ENCODE measurements at regions of chr3 and their contacts with region 1.

Region 1: GRCh38 chr3:187745201-187746058 is at the start of gene BCL6:
- DNase-seq: no peak
- ATAC-seq: peak; percentile 63
- H3K4me3 ChIP-seq: peak within 1 kb of the TSS; percentile 65; the same call in 1 of the 2 replicates
- H3K27ac ChIP-seq: no peak within 1 kb of the TSS
- H3K4me1 ChIP-seq: peaks cover 7% of the 10 kb centered on the region
- H3K27me3 ChIP-seq: peaks cover 14 to 21% of the 10 kb centered on the region in 2 experiments
- CTCF ChIP-seq: no peak
- EP300 ChIP-seq: no peak
- POLR2A ChIP-seq: 0 out of 2 replicates have a peak, but pooled peaks have one; percentile 16
- RAD21 ChIP-seq: no peak
- polyA plus RNA-seq, gene BCL6: 0.04 to 0.06 TPM

Region 2: GRCh38 chr3:187669675-187670504 is 75.5 kb before region 1 on chr3 and contains the start of gene SST:
- CTCF ChIA-PET with region 1: no interaction called
- POLR2A ChIA-PET with region 1: no interaction called
- RAD21 ChIA-PET with region 1: no interaction called
- SMC1A ChIA-PET with region 1: no interaction called
- in situ Hi-C with region 1: no loop called
- intact Hi-C with region 1: no loop called
- DNase-seq: no peak
- ATAC-seq: no peak
- H3K4me3 ChIP-seq: no peak within 1 kb of the TSS
- H3K27ac ChIP-seq: no peak within 1 kb of the TSS
- H3K4me1 ChIP-seq: no peaks in the 10 kb centered on the region
- H3K27me3 ChIP-seq: peaks cover 4 to 6% of the 10 kb centered on the region in 2 experiments; a peak in 3 of 4 replicates
- CTCF ChIP-seq: no peak
- EP300 ChIP-seq: no peak
- POLR2A ChIP-seq: no peak
- RAD21 ChIP-seq: no peak
- polyA plus RNA-seq, gene SST: not detected

Region 3: DNA sequence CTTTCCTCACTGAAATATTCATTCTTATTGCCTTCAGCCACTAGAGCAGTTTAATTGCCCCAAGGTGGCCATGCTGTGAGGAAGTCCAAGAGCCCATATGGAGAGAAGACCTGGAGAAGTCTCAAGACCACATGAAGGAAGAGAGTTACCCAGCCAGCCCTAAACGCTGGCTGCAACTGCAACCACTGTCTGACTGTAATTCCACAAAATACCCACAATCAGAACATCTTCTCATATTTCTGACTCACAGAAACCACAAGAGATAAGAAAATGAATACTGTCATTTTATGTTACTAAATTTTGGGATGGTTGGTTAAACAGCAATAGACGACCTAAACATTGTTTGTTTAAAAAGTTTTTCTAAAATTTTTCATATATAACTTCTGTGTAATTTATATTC is 60.5 kb before region 1 on chr3:
- CTCF ChIA-PET with region 1: no interaction called
- POLR2A ChIA-PET with region 1: no interaction called
- RAD21 ChIA-PET with region 1: no interaction called
- SMC1A ChIA-PET with region 1: no interaction called
- in situ Hi-C with region 1: no loop called
- intact Hi-C with region 1: no loop called
- DNase-seq: no peak
- ATAC-seq: no peak
- H3K4me3 ChIP-seq: no peak overlapping the region
- H3K27ac ChIP-seq: no peak overlapping the region
- H3K4me1 ChIP-seq: no peaks in the 10 kb centered on the region
- H3K27me3 ChIP-seq: no peaks in the 10 kb centered on the region
- CTCF ChIP-seq: no peak
- EP300 ChIP-seq: no peak
- POLR2A ChIP-seq: no peak
- RAD21 ChIP-seq: no peak

Region 4: GRCh38 chr3:187777331-187777941 is 32.0 kb after region 1 on chr3:
- CTCF ChIA-PET with region 1: interaction called, 6 read pairs
- POLR2A ChIA-PET with region 1: no interaction called
- RAD21 ChIA-PET with region 1: no interaction called
- SMC1A ChIA-PET with region 1: interaction called, 10 read pairs
- in situ Hi-C with region 1: no loop called
- intact Hi-C with region 1: no loop called
- DNase-seq: peak; percentile 46
- ATAC-seq: peak; percentile 58
- H3K4me3 ChIP-seq: no peak overlapping the region
- H3K27ac ChIP-seq: no peak overlapping the region; the same call in 1 of the 2 replicates
- H3K4me1 ChIP-seq: peaks cover 27% of the 10 kb centered on the region
- H3K27me3 ChIP-seq: no peaks in the 10 kb centered on the region
- CTCF ChIP-seq: no peak
- EP300 ChIP-seq: peak in 1 of 2 experiments; percentile 33; a peak in 1 of 4 replicates
- POLR2A ChIP-seq: no peak
- RAD21 ChIP-seq: no peak

Region 5: DNA sequence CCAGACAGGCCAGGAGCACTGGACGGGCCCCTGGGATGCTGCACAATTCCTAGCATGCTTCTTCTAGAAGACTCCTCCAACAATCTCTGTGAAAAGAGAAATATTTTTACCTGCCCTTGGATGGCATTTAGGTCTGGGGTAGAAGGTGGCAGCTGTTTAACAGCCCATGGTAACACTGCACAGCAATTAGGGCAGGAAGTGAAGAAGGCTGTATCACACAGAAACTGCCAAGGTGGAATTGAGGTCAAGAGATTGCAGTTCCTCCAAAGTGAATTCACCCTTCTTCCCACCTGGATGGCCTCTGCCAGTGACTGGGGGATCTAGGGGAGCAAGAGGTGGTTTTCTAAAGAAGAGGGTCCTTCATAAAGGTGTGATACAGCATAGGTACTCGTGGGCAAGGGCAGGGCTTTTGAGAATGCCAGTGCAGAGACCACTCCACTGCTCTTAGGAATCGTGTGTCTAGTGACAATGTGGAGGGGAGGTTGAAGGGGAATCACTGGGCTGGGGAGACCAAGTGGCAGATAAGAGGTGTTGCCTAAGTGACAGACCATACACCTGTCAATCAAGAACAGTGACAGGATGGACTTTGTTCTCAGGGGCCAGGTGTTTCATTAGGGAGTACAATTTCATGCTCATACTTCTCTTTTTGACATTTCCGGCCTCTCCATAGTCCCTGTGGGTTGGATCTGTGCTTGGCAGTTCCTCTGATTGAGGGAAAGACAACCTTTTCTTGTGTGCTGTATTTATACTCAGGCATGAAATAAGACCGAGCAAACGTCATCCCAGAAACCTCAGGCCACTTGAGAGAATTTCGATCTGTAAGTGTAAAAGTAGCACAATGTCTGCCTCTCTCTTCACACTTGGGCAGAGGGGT is 83.4 kb after region 1 on chr3:
- CTCF ChIA-PET with region 1: interaction called, 37 read pairs
- POLR2A ChIA-PET with region 1: interaction called, 3 read pairs
- RAD21 ChIA-PET with region 1: interaction called, 4 read pairs
- SMC1A ChIA-PET with region 1: interaction called, 27 read pairs
- in situ Hi-C with region 1: no loop called
- intact Hi-C with region 1: loop called (anchors 1 kb)
- DNase-seq: peak; percentile 34
- ATAC-seq: peak; percentile 88
- H3K4me3 ChIP-seq: no peak overlapping the region
- H3K27ac ChIP-seq: no peak overlapping the region
- H3K4me1 ChIP-seq: peaks cover 5% of the 10 kb centered on the region; the same call in 1 of the 2 replicates
- H3K27me3 ChIP-seq: 0 out of 4 replicates have a peak, but pooled peaks cover 0 to 4% of the 10 kb centered on the region in 2 experiments
- CTCF ChIP-seq: no peak
- EP300 ChIP-seq: peak; percentile 81; a peak in 2 of 4 replicates
- POLR2A ChIP-seq: no peak
- RAD21 ChIP-seq: no peak

Region 6: GRCh38 chr3:187919048-187919447 is 173.6 kb after region 1 on chr3:
- CTCF ChIA-PET with region 1: interaction called, 7 read pairs
- POLR2A ChIA-PET with region 1: no interaction called
- RAD21 ChIA-PET with region 1: interaction called, 3 read pairs
- SMC1A ChIA-PET with region 1: interaction called, 8 read pairs
- in situ Hi-C with region 1: no loop called
- intact Hi-C with region 1: loop called (anchors 2 kb)
- DNase-seq: peak; percentile 40
- ATAC-seq: peak; percentile 90
- H3K4me3 ChIP-seq: no peak overlapping the region
- H3K27ac ChIP-seq: no peak overlapping the region
- H3K4me1 ChIP-seq: peaks cover 18% of the 10 kb centered on the region
- H3K27me3 ChIP-seq: peaks cover 0 to 2% of the 10 kb centered on the region in 2 experiments; a peak in 1 of 4 replicates
- CTCF ChIP-seq: no peak
- EP300 ChIP-seq: 0 out of 4 replicates have a peak, but pooled peaks of 1 of the 2 experiments have one; percentile 55
- POLR2A ChIP-seq: no peak
- RAD21 ChIP-seq: 0 out of 2 replicates have a peak, but pooled peaks have one; percentile 3

Region 7: GRCh38 chr3:188348435-188349244 is 603.2 kb after region 1 on chr3:
- CTCF ChIA-PET with region 1: interaction called, 9 read pairs
- POLR2A ChIA-PET with region 1: no interaction called
- RAD21 ChIA-PET with region 1: no interaction called
- SMC1A ChIA-PET with region 1: interaction called, 3 read pairs
- in situ Hi-C with region 1: no loop called
- intact Hi-C with region 1: loop called (anchors 10 kb)
- DNase-seq: no peak
- ATAC-seq: no peak
- H3K4me3 ChIP-seq: no peak overlapping the region
- H3K27ac ChIP-seq: no peak overlapping the region
- H3K4me1 ChIP-seq: no peaks in the 10 kb centered on the region
- H3K27me3 ChIP-seq: peaks cover 0 to 4% of the 10 kb centered on the region in 2 experiments; a peak in 2 of 4 replicates
- CTCF ChIP-seq: no peak
- EP300 ChIP-seq: no peak
- POLR2A ChIP-seq: no peak
- RAD21 ChIP-seq: no peak

Region 8: DNA sequence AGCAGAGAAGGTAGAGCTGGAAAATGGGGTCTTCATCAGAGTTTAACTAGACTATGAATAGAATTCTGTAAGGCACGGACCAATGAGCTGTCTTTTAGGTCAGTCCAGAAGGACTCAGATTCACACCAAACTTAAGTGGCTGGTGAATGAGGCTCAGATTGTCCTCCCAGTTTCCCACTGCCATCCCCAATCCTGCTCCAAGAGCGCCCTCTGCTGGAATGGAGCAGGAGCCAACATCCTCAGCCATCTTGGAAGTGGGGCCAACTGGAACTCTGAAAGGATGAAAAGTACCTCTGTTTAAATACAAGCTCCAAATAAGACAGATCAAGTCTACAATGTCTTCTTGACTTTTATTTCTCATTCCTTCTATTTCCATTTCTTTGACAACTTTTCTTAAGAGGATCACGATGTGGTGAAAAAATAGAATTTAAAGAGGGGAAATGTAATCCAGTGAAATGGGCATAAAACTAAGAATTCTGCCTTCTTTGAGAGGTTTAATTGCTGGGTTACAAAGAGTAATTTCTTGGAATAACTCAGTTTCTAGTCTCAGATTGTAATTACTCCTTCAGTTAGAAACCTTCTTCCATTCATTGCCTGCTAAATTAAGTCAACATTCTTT is 1209.3 kb after region 1 on chr3:
- CTCF ChIA-PET with region 1: interaction called, 437 read pairs
- POLR2A ChIA-PET with region 1: interaction called, 3 read pairs
- RAD21 ChIA-PET with region 1: interaction called, 130 read pairs
- SMC1A ChIA-PET with region 1: interaction called, 118 read pairs
- in situ Hi-C with region 1: loop called (anchors 5 kb)
- intact Hi-C with region 1: no loop called
- DNase-seq: peak; percentile 3
- ATAC-seq: peak; percentile 79
- H3K4me3 ChIP-seq: no peak overlapping the region
- H3K27ac ChIP-seq: no peak overlapping the region
- H3K4me1 ChIP-seq: no peaks in the 10 kb centered on the region
- H3K27me3 ChIP-seq: peaks cover 0 to 2% of the 10 kb centered on the region in 2 experiments; a peak in 1 of 4 replicates
- CTCF ChIP-seq: peak; percentile 77 to 82 (median 79)
- EP300 ChIP-seq: no peak
- POLR2A ChIP-seq: no peak
- RAD21 ChIP-seq: peak; percentile 95